Activated CD8-positive, alpha-beta memory T cell treated with anti-CD3 and anti-CD28 coated beads, Interleukin-2, amount 10 ng/mL, durations not matched to agents 7 days and 5 days (primary cell): ENCODE measurements at regions of chr10 and their contacts with region 1.

Region 1: GRCh38 chr10:62244780-62245467 is 23.7 kb downstream of the RTKN2 start:
- DNase-seq: peak; percentile 74
- ATAC-seq: peak; percentile 82
- H3K4me3 Mint-ChIP-seq: peak overlapping the region; percentile 42
- H3K27ac Mint-ChIP-seq: peak overlapping the region; percentile 82
- H3K4me1 Mint-ChIP-seq: peaks cover 33% of the 10 kb centered on the region
- H3K27me3 Mint-ChIP-seq: no peaks in the 10 kb centered on the region

Region 2: GRCh38 chr10:62050893-62051433 is 194.0 kb before region 1 on chr10:
- CTCF ChIA-PET with region 1: interaction called, 148 read pairs
- DNase-seq: peak; percentile 92
- ATAC-seq: peak; percentile 60
- H3K4me3 Mint-ChIP-seq: peak overlapping the region; percentile 83
- H3K27ac Mint-ChIP-seq: peak overlapping the region; percentile 99
- H3K4me1 Mint-ChIP-seq: peaks cover 93% of the 10 kb centered on the region
- H3K27me3 Mint-ChIP-seq: no peaks in the 10 kb centered on the region

Region 3: DNA sequence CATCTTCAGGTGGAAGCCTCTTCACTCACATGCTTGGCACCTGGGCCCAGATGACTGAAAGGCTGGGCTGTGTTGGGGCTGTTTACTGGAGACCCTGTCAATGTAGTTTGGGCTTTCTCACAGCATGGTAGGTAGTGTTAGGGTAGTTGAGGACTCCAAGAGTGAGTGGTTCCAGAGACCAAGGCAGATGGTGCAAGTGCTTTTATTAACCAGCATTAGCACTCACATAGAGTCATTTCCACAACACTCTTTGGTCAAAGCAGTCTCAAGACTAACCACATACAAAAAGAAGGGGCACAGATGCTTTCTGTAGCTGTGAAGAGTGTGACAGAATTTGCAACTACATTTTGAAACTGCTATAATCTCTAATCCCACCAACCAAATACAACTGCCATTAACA is 111.3 kb before region 1 on chr10:
- CTCF ChIA-PET with region 1: no interaction called
- DNase-seq: no peak
- ATAC-seq: peak; percentile 53
- H3K4me3 Mint-ChIP-seq: no peak overlapping the region
- H3K27ac Mint-ChIP-seq: no peak overlapping the region
- H3K4me1 Mint-ChIP-seq: peaks cover 13% of the 10 kb centered on the region
- H3K27me3 Mint-ChIP-seq: no peaks in the 10 kb centered on the region

Region 4: DNA sequence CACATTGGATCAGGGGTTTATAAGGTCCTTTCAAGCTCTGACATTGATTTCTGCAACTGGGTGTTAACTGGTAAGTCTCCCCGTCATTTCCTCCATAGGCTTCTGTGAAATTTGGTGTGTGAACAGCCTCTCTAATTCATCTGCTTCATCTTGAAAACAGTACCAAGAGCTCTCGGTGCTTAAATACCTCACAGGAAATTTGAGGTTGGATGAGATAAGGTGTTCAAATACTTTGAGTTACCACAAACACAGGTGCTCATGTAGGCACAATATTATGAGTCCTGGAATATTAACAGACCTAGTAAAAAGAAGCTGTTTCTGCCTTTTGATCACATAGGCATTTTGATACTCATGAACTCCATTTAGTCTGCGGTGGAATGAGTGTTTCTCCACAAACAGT is 61.5 kb before region 1 on chr10:
- CTCF ChIA-PET with region 1: interaction called, 39 read pairs
- DNase-seq: peak; percentile 78
- ATAC-seq: peak; percentile 76
- H3K4me3 Mint-ChIP-seq: peak overlapping the region; percentile 17
- H3K27ac Mint-ChIP-seq: peak overlapping the region; percentile 92
- H3K4me1 Mint-ChIP-seq: peaks cover 74% of the 10 kb centered on the region
- H3K27me3 Mint-ChIP-seq: no peaks in the 10 kb centered on the region

Region 5: GRCh38 chr10:62402508-62402907 is 157.6 kb after region 1 on chr10:
- CTCF ChIA-PET with region 1: no interaction called
- DNase-seq: no peak
- ATAC-seq: no peak
- H3K4me3 Mint-ChIP-seq: no peak overlapping the region
- H3K27ac Mint-ChIP-seq: no peak overlapping the region
- H3K4me1 Mint-ChIP-seq: no peaks in the 10 kb centered on the region
- H3K27me3 Mint-ChIP-seq: peaks cover 11% of the 10 kb centered on the region

Region 6: GRCh38 chr10:62618576-62619412 is 373.9 kb after region 1 on chr10:
- CTCF ChIA-PET with region 1: no interaction called
- DNase-seq: no peak
- ATAC-seq: no peak
- H3K4me3 Mint-ChIP-seq: no peak overlapping the region
- H3K27ac Mint-ChIP-seq: no peak overlapping the region
- H3K4me1 Mint-ChIP-seq: peaks cover 54% of the 10 kb centered on the region
- H3K27me3 Mint-ChIP-seq: peaks cover 15% of the 10 kb centered on the region